HEK293T (cell line): ENCODE measurements at regions of chr15 and their contacts with region 1.

Region 1: DNA sequence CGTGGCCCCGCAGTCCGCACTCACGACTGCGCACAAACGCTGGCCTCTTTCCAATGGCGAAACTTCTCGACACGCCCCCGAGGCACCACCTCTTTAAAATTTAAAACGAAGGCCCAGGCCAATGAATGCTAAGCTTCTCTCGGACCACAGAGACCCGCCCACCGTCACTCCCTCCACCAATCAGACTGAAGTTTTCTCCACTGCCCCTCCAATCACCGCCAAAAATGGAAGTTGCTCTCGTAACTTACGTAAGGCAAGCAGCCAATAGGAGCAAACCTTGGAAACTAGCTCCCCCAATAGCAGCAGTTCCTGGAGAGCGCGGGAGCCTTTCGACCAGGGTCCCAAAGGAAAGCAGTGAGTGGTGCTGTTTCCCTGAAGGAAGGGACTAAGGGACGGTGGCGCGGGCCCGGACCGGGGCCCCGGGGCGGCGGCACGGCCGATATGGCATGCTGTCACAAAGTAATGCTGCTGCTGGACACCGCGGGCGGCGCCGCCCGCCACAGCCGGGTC is at the start of gene TICRR:
- DNase-seq: peak; percentile 95

Region 2: DNA sequence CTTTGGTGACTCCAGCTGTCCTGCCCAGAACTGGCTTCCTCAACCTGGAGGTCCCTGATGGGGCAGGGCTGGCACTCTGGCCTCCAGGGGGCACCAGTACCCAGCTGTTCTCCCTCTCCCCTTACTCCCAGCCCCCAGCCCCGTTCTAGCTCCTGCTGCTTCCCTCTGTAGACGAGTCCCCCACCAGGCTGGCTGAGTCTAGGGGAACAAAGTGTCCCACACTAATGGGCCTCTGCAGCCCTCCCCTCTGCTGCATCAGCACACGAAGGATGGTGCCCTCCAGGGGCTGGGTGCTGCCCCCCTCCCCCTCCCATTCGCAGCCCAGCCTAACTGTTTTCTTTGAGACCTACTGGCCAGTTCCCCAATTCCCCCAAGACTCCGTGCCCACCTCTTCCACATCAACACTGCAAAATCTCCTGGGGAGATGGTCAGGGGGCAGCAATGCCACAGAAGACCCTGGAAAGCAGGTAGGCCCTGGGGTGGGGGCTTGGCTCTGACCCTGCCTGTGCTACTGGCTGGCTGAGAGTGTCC is 83.0 kb before region 1 on chr15:
- CTCF ChIA-PET with region 1: interaction called, 8 read pairs
- POLR2A ChIA-PET with region 1: interaction called, 16 read pairs
- DNase-seq: peak; percentile 58

Region 3: GRCh38 chr15:89531796-89532537 is 43.2 kb before region 1 on chr15:
- CTCF ChIA-PET with region 1: no interaction called
- POLR2A ChIA-PET with region 1: interaction called, 17 read pairs
- DNase-seq: no peak

Region 4: GRCh38 chr15:89559769-89560270 is 15.4 kb before region 1 on chr15:
- CTCF ChIA-PET with region 1: interaction called, 4 read pairs
- POLR2A ChIA-PET with region 1: interaction called, 26 read pairs
- DNase-seq: no peak

Region 5: DNA sequence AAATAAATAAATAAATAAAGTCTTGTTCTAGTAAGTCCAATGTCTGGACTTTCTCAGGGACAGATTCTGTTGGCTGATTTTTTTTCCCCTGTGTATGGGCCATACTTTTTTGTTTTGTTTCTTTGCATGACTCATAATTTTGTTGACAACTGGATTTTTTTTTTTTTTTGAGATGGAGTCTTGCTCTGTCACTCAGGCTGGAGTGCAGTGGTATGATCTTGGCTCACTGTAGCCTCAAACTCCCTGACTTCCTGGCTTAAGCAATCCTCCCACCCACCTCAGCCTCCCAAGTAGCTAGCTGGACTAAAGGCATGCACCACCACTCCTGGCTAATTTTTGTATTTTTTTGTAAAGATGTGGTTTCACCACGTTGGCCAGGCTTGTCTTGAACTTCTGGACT is 39.0 kb after region 1 on chr15:
- CTCF ChIA-PET with region 1: no interaction called
- POLR2A ChIA-PET with region 1: interaction called, 10 read pairs
- DNase-seq: no peak

Region 6: DNA sequence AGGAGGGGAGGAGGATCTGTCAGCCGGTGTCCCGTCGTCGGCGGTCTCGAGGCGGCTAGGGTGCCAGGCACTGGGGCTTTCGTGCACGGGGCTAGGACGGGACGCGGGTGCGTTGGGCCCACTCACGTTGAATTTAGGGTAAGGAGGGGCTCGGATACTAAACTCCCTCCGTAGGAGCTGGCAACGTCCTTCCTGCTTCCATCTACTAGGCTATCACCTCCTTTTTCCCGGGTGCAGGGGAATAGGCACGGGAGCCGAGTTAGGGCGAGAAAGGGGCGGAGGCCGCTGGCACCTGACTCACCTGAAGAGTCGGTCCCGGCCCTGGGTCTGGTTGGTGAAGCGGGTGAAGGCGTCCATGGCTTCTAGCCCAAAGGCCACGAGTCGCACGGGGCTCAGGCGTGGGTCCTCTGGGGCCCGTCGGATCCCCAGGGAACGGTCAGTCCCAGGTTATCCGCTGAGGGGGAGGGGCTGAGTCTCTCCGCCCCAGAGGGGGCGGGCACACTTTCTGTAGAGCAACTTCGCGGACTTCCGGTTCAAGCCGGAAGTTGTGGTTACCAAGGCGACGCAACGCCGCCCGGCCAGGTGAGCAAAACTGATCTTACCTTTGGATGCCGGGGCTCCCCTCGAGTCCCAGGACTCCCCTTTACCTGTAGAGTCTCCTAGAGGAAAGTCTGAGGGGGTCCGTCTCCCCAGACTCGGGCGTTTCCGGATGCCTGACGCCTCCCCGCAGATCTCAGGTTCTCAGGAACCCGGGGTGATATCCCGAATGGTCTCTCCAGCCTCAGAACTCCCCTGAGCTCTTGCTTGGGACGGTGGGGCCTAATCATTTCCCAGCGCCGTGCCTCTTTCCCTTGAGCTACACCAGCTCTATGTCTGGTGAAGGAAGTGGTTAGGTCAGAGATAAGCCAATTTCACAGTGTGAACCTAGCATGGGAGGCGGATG is 115.3 kb after region 1 on chr15 and contains the starts of genes PEX11A and WDR93:
- CTCF ChIA-PET with region 1: no interaction called
- POLR2A ChIA-PET with region 1: no interaction called
- DNase-seq: peak; percentile 95